GM12878 (cell line): ENCODE measurements at regions of chr12 and their contacts with region 1.

Region 1: DNA sequence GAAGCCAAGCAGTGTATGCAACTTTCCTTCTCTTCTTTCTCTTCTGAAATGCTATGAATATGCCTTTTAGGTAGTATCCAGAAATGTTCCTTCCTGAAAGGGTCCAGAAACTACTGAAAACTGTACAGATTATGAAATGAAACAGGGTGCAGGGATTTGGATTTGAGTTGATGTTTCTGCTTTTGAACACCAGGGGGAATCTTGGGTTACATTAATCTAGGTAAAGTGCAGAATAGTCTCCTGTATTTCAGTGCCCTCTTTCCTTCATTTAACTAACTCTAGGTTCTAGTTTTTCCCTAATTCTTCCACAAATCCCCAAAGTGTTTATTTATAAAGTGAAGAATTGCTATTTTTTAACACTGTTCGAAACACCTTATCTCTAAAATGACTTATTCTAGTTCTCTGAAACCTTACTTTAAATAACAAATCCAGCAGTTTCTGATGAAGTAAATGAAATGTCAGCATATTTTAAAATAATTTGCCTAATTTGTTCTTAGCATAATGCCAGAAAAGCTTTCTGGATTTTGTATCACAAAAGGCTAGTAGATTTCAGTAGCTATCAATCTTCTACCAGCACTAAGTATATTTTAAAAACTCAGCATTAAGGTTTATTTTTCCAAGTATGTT is 111.9 kb downstream of the LRRK2 start:
- DNase-seq: no peak
- ATAC-seq: peak; percentile 77
- H3K4me3 ChIP-seq: no peak overlapping the region
- H3K27ac ChIP-seq: no peak overlapping the region
- H3K4me1 ChIP-seq: no peaks in the 10 kb centered on the region
- H3K27me3 ChIP-seq: no peaks in the 10 kb centered on the region
- CTCF ChIP-seq: peak; percentile 40 to 47 (median 41); a peak in 5 of 6 replicates
- EP300 ChIP-seq: no peak
- POLR2A ChIP-seq: no peak
- RAD21 ChIP-seq: peak; percentile 50

Region 2: DNA sequence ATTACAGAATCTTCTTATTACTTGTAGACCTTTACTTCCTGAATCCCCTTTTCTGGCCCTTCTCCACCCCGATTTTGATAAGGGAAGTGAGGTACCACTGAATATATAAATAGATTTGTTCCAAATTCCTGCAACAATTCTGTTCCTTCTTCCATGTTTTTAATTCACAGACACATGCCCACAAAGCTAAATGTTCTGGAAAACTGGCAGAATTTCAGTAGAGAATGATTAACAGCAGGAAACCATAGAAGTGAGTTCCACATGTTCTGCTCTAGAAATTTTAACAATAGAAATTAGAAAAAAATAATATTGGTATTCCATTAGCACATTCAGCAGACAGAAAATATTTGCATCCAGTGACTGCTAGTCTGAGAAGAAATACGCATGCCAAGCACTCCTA is 370.4 kb before region 1 on chr12:
- CTCF ChIA-PET with region 1: no interaction called
- POLR2A ChIA-PET with region 1: no interaction called
- RAD21 ChIA-PET with region 1: no interaction called
- SMC1A ChIA-PET with region 1: no interaction called
- in situ Hi-C with region 1: no loop called
- intact Hi-C with region 1: no loop called
- DNase-seq: no peak
- ATAC-seq: no peak
- H3K4me3 ChIP-seq: no peak overlapping the region
- H3K27ac ChIP-seq: no peak overlapping the region
- H3K4me1 ChIP-seq: no peaks in the 10 kb centered on the region
- H3K27me3 ChIP-seq: no peaks in the 10 kb centered on the region
- CTCF ChIP-seq: no peak
- EP300 ChIP-seq: no peak
- POLR2A ChIP-seq: no peak
- RAD21 ChIP-seq: no peak

Region 3: DNA sequence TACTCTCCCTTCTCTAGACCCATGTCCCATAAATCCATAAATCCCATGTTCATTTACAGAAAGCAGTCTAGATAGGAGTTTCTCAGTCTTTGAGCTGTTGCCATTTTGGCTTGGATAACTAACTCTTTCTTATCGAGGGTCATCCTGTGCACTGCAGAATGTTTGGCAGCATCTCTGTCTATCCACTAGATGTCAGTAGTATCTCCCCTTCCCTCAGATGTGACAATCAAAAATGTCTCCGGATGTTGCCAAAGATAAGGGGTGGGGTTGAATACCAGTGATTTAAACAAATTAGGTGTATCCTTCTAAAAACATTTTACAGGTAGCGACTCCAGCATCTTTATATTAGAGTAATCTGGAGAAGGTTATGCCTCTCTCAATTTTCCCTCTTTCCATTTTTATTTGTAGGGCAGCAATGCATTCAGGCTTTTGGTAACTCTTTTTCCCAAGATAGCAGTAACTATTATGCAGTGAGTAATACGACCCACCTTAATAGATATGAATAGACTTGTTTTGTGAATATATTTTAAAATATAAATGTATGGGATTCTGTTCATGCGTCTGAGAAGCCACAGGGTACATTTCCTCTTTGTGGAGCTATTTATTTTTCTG is 11.2 kb before region 1 on chr12:
- CTCF ChIA-PET with region 1: interaction called, 43 read pairs
- POLR2A ChIA-PET with region 1: no interaction called
- RAD21 ChIA-PET with region 1: interaction called, 4 read pairs
- SMC1A ChIA-PET with region 1: interaction called, 11 read pairs
- in situ Hi-C with region 1: no loop called
- intact Hi-C with region 1: no loop called
- DNase-seq: no peak
- ATAC-seq: peak; percentile 98
- H3K4me3 ChIP-seq: no peak overlapping the region
- H3K27ac ChIP-seq: no peak overlapping the region
- H3K4me1 ChIP-seq: no peaks in the 10 kb centered on the region
- H3K27me3 ChIP-seq: no peaks in the 10 kb centered on the region
- CTCF ChIP-seq: peak; percentile 60 to 80 (median 78)
- EP300 ChIP-seq: no peak
- POLR2A ChIP-seq: no peak
- RAD21 ChIP-seq: peak; percentile 69

Region 4: DNA sequence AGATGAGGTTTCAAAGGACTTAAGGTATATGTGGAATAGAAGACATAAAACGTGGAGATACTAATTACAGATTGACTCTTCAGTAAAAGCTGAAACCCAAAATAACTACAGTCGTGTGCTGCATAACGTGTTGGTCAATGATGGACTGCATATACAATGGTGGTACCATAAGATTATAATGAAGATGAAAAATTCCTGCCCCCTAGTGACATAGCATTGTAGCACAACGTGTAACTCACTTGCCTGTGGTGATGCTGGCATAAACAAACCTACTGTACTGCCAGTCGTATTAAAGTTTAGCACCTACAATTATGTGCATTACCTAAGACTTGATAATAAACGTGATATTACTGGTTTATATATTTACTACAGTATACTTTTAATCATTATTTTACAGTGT is 38.4 kb after region 1 on chr12:
- CTCF ChIA-PET with region 1: interaction called, 6 read pairs
- POLR2A ChIA-PET with region 1: no interaction called
- RAD21 ChIA-PET with region 1: interaction called, 4 read pairs
- SMC1A ChIA-PET with region 1: interaction called, 13 read pairs
- in situ Hi-C with region 1: no loop called
- intact Hi-C with region 1: no loop called
- DNase-seq: no peak
- ATAC-seq: peak; percentile 91
- H3K4me3 ChIP-seq: no peak overlapping the region
- H3K27ac ChIP-seq: no peak overlapping the region
- H3K4me1 ChIP-seq: no peaks in the 10 kb centered on the region
- H3K27me3 ChIP-seq: no peaks in the 10 kb centered on the region
- CTCF ChIP-seq: peak; percentile 30 to 46 (median 45); a peak in 5 of 6 replicates
- EP300 ChIP-seq: no peak
- POLR2A ChIP-seq: no peak
- RAD21 ChIP-seq: no peak

Region 5: GRCh38 chr12:40921563-40922163 is 585.0 kb after region 1 on chr12:
- CTCF ChIA-PET with region 1: interaction called, 3 read pairs
- POLR2A ChIA-PET with region 1: no interaction called
- RAD21 ChIA-PET with region 1: no interaction called
- SMC1A ChIA-PET with region 1: no interaction called
- in situ Hi-C with region 1: no loop called
- intact Hi-C with region 1: loop called (anchors 5 kb)
- DNase-seq: no peak
- ATAC-seq: peak; percentile 49; the same call in 2 of the 3 replicates
- H3K4me3 ChIP-seq: no peak overlapping the region
- H3K27ac ChIP-seq: no peak overlapping the region
- H3K4me1 ChIP-seq: no peaks in the 10 kb centered on the region
- H3K27me3 ChIP-seq: no peaks in the 10 kb centered on the region
- CTCF ChIP-seq: peak; percentile 34 to 60 (median 53); a peak in 5 of 6 replicates
- EP300 ChIP-seq: no peak
- POLR2A ChIP-seq: no peak
- RAD21 ChIP-seq: peak; percentile 73